PC-3 (cell line): ENCODE measurements at regions of chr10 and their contacts with region 1.

Region 1: DNA sequence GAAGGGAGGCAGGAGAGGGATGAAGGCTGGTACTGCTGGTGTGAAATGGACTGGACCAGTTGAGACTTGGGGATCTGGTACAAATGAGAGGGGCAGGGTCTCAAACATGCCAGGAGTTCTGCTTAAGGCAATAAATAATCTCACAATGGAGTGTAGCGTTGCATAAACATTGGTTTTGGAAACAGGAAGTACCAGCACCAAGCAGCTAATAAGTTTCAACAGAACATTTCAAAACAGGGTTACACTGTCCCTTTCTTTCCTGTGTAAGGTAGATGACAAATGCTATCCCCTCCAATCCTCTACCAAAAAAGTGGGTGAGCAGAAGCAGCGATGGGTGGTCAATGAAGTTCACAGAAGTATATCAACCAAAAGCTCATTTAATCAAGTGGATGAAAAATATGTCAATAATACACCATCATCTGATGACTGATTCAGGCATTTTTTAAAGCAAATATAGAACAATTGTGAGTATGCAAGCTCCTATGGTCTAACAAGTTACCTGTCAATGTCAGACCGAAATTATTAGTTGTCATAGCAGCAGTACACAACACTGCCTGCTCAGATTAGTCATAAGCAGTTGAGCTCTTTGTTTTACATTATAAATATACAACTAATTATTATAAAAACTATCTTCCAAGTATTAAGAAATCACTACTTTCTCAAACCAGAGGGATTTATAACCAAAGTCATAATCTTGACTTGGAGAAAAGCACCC is 220.0 kb downstream of the FAM107B start:
- DNase-seq: peak; percentile 55
- ATAC-seq: peak; percentile 29
- H3K4me3 ChIP-seq: peak overlapping the region; percentile 39; the same call in 1 of the 2 replicates
- H3K27ac ChIP-seq: peak overlapping the region; percentile 93
- H3K4me1 ChIP-seq: peaks cover 51% of the 10 kb centered on the region
- H3K27me3 ChIP-seq: no peaks in the 10 kb centered on the region
- CTCF ChIP-seq: no peak

Region 2: GRCh38 chr10:14397066-14397465 is 157.6 kb before region 1 on chr10:
- CTCF ChIA-PET with region 1: no interaction called
- POLR2A ChIA-PET with region 1: no interaction called
- intact Hi-C with region 1: no loop called
- DNase-seq: peak; percentile 45
- ATAC-seq: peak; percentile 18; the same call in 1 of the 2 replicates
- H3K4me3 ChIP-seq: no peak overlapping the region
- H3K27ac ChIP-seq: no peak overlapping the region
- H3K4me1 ChIP-seq: no peaks in the 10 kb centered on the region
- H3K27me3 ChIP-seq: no peaks in the 10 kb centered on the region; the same call in 1 of the 2 replicates
- CTCF ChIP-seq: no peak

Region 3: GRCh38 chr10:14571866-14572507 is 17.3 kb after region 1 on chr10:
- CTCF ChIA-PET with region 1: no interaction called
- POLR2A ChIA-PET with region 1: no interaction called
- intact Hi-C with region 1: loop called (anchors 2 kb)
- DNase-seq: peak; percentile 72
- ATAC-seq: peak; percentile 81
- H3K4me3 ChIP-seq: no peak overlapping the region
- H3K27ac ChIP-seq: peak overlapping the region; percentile 71
- H3K4me1 ChIP-seq: peaks cover 40% of the 10 kb centered on the region
- H3K27me3 ChIP-seq: no peaks in the 10 kb centered on the region
- CTCF ChIP-seq: no peak